ENCODE measurements at regions of chr1 and their contacts with region 1.

Region 1: GRCh38 chr1:209692745-209693504 is 11.7 kb upstream of the HSD11B1 start:
- DNase-seq: peak; percentile 61 to 79
- ATAC-seq: peak; percentile 62 to 76; a peak in 4 of 6 replicates
- H3K4me3 ChIP-seq: no peak overlapping the region
- H3K27ac ChIP-seq: peak overlapping the region; percentile 42 to 58; a peak in 5 of 6 replicates
- H3K4me1 ChIP-seq: peaks cover 38% of the 10 kb centered on the region
- CTCF ChIP-seq: peak; percentile 98
- EP300 ChIP-seq: no peak
- POLR2A ChIP-seq: no peak
- RAD21 ChIP-seq: peak; percentile 98

Region 2: GRCh38 chr1:209576798-209577197 is 116.1 kb before region 1 on chr1:
- CTCF ChIA-PET with region 1: interaction called, 45 read pairs
- POLR2A ChIA-PET with region 1: interaction called, 3 read pairs
- DNase-seq: peak; percentile 69 to 87
- ATAC-seq: peak; percentile 96 to 100
- H3K4me3 ChIP-seq: no peak overlapping the region
- H3K27ac ChIP-seq: no peak overlapping the region
- H3K4me1 ChIP-seq: no peaks in the 10 kb centered on the region
- CTCF ChIP-seq: peak; percentile 86
- EP300 ChIP-seq: no peak
- POLR2A ChIP-seq: no peak
- RAD21 ChIP-seq: peak; percentile 89 to 92

Region 3: DNA sequence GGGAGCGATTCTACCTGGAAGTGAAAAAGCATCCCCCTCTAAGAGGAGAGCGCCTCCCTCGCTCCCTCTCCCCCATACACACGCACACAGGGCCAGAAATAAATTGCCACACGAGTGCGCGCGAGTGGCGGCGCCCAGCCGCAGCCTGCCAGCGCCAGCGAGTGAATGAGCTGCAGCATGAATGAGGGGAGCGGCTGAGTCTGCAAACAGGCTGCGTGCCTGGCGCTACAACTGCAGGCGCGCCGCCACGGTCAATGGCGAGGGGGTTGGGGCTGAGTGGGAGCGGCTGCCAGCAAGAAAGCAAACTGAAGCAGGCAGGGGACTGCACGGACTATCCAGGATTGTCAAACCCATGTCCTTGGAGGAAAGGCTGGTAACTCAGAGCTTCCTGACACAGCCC is 107.3 kb before region 1 on chr1:
- CTCF ChIA-PET with region 1: interaction called, 23 read pairs
- POLR2A ChIA-PET with region 1: no interaction called
- DNase-seq: no peak
- ATAC-seq: peak; percentile 52 to 67; a peak in 5 of 6 replicates
- H3K4me3 ChIP-seq: 0 out of 3 replicates have a peak overlapping the region, but pooled peaks have one; percentile 24
- H3K27ac ChIP-seq: no peak overlapping the region
- H3K4me1 ChIP-seq: peaks cover 10% of the 10 kb centered on the region
- CTCF ChIP-seq: no peak
- EP300 ChIP-seq: no peak
- POLR2A ChIP-seq: no peak
- RAD21 ChIP-seq: no peak

Region 4: GRCh38 chr1:209601809-209602657 is 90.9 kb before region 1 on chr1:
- CTCF ChIA-PET with region 1: interaction called, 32 read pairs
- POLR2A ChIA-PET with region 1: interaction called, 3 read pairs
- DNase-seq: peak; percentile 55 to 60
- ATAC-seq: peak; percentile 96 to 98
- H3K4me3 ChIP-seq: no peak overlapping the region
- H3K27ac ChIP-seq: no peak overlapping the region
- H3K4me1 ChIP-seq: peaks cover 12% of the 10 kb centered on the region
- CTCF ChIP-seq: peak; percentile 74
- EP300 ChIP-seq: no peak
- POLR2A ChIP-seq: no peak
- RAD21 ChIP-seq: peak; percentile 80 to 81

Region 5: GRCh38 chr1:209651148-209651547 is 41.8 kb before region 1 on chr1:
- CTCF ChIA-PET with region 1: interaction called, 20 read pairs
- POLR2A ChIA-PET with region 1: interaction called, 9 read pairs
- DNase-seq: peak; percentile 82 to 84
- ATAC-seq: peak; percentile 84 to 86
- H3K4me3 ChIP-seq: no peak overlapping the region
- H3K27ac ChIP-seq: peak overlapping the region; percentile 73 to 81
- H3K4me1 ChIP-seq: peaks cover 84% of the 10 kb centered on the region
- CTCF ChIP-seq: no peak
- EP300 ChIP-seq: no peak
- POLR2A ChIP-seq: no peak
- RAD21 ChIP-seq: no peak

Region 6: GRCh38 chr1:209769171-209769904 is 76.4 kb after region 1 on chr1:
- CTCF ChIA-PET with region 1: no interaction called
- POLR2A ChIA-PET with region 1: no interaction called
- DNase-seq: no peak
- ATAC-seq: no peak
- H3K4me3 ChIP-seq: no peak overlapping the region
- H3K27ac ChIP-seq: no peak overlapping the region
- H3K4me1 ChIP-seq: no peaks in the 10 kb centered on the region
- CTCF ChIP-seq: no peak
- EP300 ChIP-seq: no peak
- POLR2A ChIP-seq: no peak
- RAD21 ChIP-seq: no peak

Measured in A549 (cell line).